ENCODE measurements at regions of chr12 and their contacts with region 1.

Region 1: GRCh38 chr12:3073438-3074250 is 3.5 kb upstream of the TSPAN9 start:
- DNase-seq: peak; percentile 87
- H3K4me3 Mint-ChIP-seq: no peak overlapping the region
- H3K27ac Mint-ChIP-seq: no peak overlapping the region
- H3K4me1 Mint-ChIP-seq: no peaks in the 10 kb centered on the region
- H3K27me3 Mint-ChIP-seq: peaks cover 30% of the 10 kb centered on the region
- CTCF ChIP-seq: peak; percentile 79

Region 2: GRCh38 chr12:2376908-2377657 is 696.6 kb before region 1 on chr12:
- CTCF ChIA-PET with region 1: no interaction called
- intact Hi-C with region 1: no loop called
- DNase-seq: no peak
- H3K4me3 Mint-ChIP-seq: no peak overlapping the region
- H3K27ac Mint-ChIP-seq: no peak overlapping the region
- H3K4me1 Mint-ChIP-seq: no peaks in the 10 kb centered on the region
- H3K27me3 Mint-ChIP-seq: peaks cover 73% of the 10 kb centered on the region
- CTCF ChIP-seq: no peak

Region 3: DNA sequence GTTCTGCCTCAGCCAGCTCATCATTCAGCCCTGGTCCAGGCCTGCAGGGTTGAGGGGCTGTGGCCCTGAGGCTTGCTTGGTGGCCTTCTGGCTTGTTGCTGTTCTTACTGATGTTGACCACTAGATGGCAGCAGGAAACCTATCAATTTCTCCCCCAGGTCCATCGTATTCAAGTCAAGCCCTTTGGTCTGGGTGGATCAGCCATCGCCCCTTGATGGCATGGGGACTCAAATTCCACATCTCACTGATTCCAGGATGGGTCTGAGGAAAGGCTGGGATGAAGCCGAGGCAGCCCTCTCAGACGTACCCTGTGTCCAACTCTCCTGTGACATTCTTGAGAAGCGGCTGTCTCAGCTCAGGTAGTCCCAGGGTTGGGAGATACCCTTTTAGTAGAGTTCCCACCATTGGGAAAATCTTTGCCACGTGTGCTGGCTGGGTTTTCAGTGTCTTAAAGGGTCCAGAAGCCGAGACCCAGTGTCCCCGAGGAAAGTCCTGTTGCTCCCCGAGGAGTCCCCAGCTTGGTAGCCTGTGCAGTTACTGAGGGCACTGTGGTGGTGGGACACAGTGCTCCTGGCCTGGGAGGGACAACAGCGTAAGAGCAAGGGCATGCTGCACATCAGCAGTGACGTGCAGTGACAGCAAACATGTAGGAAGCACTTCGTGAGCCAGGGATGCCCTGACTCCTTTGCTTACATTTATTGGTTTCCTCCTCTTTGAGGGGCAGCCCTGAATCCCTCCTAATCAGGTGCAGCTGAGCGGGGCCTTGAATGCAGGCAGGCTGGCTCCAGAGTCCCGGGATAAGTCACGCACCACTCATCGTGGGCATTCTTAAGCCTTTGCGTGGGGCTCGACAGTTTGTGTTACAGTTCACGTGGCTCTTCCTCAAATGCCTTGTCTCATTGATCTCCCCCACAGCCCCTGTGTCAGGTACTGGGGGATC is 62.1 kb after region 1 on chr12:
- CTCF ChIA-PET with region 1: interaction called, 5 read pairs
- intact Hi-C with region 1: loop called (anchors 10 kb)
- DNase-seq: peak; percentile 53
- H3K4me3 Mint-ChIP-seq: no peak overlapping the region
- H3K27ac Mint-ChIP-seq: no peak overlapping the region
- H3K4me1 Mint-ChIP-seq: no peaks in the 10 kb centered on the region
- H3K27me3 Mint-ChIP-seq: peaks cover 10% of the 10 kb centered on the region
- CTCF ChIP-seq: peak; percentile 75

Region 4: GRCh38 chr12:3168223-3169221 is 94.9 kb after region 1 on chr12:
- CTCF ChIA-PET with region 1: no interaction called
- intact Hi-C with region 1: no loop called
- DNase-seq: peak; percentile 76
- H3K4me3 Mint-ChIP-seq: no peak overlapping the region
- H3K27ac Mint-ChIP-seq: peak overlapping the region; percentile 19
- H3K4me1 Mint-ChIP-seq: peaks cover 34% of the 10 kb centered on the region
- H3K27me3 Mint-ChIP-seq: peaks cover 55% of the 10 kb centered on the region
- CTCF ChIP-seq: no peak

Region 5: DNA sequence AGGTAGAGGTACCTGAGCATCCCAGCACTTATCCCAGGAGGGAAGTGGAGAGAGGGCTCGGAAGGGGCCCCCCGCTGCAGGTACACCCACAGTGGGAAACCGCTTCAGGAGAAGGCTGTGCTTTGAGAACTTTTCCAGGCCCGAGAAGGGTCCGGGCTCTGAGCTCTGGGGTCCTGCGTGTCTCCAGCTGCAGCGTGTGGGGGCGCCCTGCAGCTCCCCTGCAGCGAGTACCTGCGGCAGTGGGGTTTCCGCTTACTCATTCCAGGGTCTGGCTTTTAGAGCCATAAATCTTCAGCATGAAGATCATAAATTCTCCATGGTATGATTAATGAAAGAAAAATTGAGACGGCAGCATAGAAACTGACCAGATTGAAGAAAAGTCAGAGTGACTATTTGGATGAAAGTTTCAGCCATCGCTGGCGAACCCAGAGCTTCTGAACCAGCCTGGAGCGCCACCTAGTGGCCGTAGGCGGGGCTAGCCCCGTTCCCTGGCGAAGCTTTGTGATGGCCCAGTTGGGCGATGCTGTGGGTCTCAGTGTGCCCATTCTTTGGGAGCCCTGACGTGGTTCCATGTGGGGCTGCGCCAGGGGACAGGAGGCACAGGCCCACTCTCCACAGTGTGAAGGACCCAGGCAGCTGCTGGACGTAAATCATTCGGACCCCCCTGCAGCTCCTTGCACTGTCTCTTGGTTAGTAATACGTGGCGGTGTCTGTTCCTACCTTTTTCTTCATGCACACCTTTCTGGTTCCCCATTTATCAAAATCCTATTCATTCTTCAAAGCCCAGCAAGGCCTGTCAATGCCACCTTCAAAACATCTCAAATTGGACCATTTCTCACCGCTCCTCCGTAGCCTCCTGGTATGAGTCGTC is 201.8 kb after region 1 on chr12:
- CTCF ChIA-PET with region 1: interaction called, 14 read pairs
- intact Hi-C with region 1: loop called (anchors 2 kb)
- DNase-seq: peak; percentile 85
- H3K4me3 Mint-ChIP-seq: no peak overlapping the region
- H3K27ac Mint-ChIP-seq: no peak overlapping the region
- H3K4me1 Mint-ChIP-seq: peaks cover 16% of the 10 kb centered on the region
- H3K27me3 Mint-ChIP-seq: peaks cover 47% of the 10 kb centered on the region
- CTCF ChIP-seq: peak; percentile 84